ENCODE measurements at regions of chr1 and their contacts with region 1.

Region 1: GRCh38 chr1:8026153-8026975 is at the start of gene ERRFI1:
- DNase-seq: peak; percentile 93 to 97
- ATAC-seq: peak; percentile 96 to 99 (median 97)
- H3K4me3 ChIP-seq: peak within 1 kb of the TSS; percentile 51 to 91 (median 88)
- H3K27ac ChIP-seq: peak within 1 kb of the TSS; percentile 87 to 94 (median 90)
- H3K4me1 ChIP-seq: peaks cover 0 to 59% (median 35%) of the 10 kb centered on the region in 9 donors
- H3K27me3 ChIP-seq: peaks cover 0 to 58% (median 0%) of the 10 kb centered on the region in 7 donors
- CTCF ChIP-seq: no peak
- total RNA-seq, gene ERRFI1: 5.8 to 15.9 (median 10.0) TPM

Region 2: DNA sequence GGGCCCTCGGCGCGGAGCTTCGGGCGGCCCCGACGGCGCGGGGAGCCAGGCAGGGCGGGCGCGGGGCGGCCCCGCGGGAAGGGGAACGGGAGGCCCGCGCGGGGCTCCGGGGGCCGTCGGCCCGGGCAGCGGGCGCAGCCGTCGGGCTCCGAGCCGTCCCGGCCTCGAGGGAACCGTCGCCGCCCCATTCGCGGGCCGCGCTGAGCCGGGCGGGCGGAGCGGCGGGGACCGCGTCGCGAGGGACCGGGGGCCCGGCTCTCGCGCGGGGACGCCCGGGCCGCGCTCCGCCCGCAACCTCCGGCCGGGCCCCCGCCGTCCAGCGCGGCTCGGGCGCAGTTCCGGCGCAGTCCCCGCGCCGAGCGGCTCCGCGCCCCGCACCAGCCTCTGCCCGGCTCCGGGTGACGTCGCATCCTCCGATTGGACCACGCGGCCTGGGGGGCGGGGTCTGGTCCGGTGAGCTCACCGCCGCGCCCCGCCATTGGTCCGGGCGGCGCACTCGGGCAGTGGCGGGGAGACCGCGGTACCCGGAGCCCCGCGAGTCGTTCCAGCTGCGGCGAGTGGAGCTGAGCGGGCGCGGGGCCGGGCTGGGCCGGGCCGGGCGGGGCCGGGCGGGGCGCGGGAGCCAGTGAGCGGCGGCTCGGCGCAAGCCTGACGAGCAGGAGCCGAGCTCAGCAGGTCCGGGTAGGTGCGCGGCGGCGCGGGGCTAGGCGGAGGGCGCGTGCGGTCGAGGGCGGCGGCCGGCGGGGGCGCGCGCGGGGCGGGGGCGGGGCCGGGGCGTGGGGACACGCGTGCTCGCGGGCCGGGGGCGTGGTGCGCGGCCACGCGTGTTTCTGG is 321.9 kb before region 1 on chr1:
- intact Hi-C with region 1: no loop called
- DNase-seq: peak; percentile 94 to 95
- ATAC-seq: peak; percentile 99 to 100 (median 100)
- H3K4me3 ChIP-seq: peak overlapping the region in 9 of 10 donors; percentile 48 to 64 (median 57)
- H3K27ac ChIP-seq: peak overlapping the region in 1 of 10 donors; percentile 25
- H3K4me1 ChIP-seq: peaks cover 0 to 16% (median 6%) of the 10 kb centered on the region in 9 donors
- H3K27me3 ChIP-seq: peaks cover 0 to 63% (median 0%) of the 10 kb centered on the region in 7 donors
- CTCF ChIP-seq: no peak

Region 3: GRCh38 chr1:7983086-7983778 is 43.1 kb before region 1 on chr1:
- intact Hi-C with region 1: loop called in 2 of 10 experiments (anchors 5 kb)
- DNase-seq: peak in 1 of 2 donors; percentile 7
- ATAC-seq: peak in 6 of 8 donors; percentile 54 to 71 (median 68)
- H3K4me3 ChIP-seq: no peak overlapping the region
- H3K27ac ChIP-seq: peak overlapping the region in 1 of 10 donors; percentile 4
- H3K4me1 ChIP-seq: peaks cover 0 to 26% (median 15%) of the 10 kb centered on the region in 9 donors
- H3K27me3 ChIP-seq: no peaks in the 10 kb centered on the region
- CTCF ChIP-seq: no peak

Region 4: DNA sequence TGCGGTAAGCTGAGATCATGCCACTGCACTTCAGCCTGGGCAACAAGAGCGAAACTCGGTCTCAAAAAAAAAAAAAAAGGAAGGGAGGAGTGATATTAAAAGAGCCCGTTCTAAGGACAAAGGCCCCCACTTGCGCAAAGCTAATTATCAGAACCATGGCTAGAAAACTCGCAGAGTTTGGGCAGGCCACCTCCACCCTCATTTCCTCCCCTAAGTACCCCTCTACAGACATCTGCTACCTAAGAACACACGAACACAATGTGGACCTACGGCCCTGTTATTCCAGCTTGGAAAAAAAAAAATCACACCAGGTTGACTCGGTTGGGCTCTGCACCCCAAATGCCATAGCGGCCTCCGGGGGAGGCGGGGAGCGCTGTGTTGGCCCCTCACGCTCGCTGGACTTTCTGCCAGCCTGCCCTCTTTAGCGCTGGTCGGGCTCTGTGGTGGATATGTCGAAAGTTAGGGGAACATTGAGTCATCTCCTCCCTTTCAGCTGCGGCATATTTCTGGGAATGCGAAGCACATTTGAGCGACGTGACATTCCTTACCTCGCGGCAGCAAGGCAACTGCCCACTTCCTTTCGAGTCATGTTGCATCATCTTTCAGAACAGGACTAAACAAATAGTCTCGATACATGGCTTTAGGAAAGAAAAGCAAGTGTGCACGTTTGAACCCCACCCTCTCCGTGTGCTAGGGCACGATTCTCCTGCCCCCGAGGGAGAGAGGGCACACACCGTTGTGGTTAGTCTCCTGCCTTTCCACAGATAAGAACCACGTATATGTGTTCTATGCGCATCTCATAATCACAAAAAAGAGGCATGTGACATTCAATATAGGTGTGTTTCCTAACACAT is 185.5 kb after region 1 on chr1:
- intact Hi-C with region 1: loop called in 3 of 10 experiments (anchors 5 to 10 kb)
- DNase-seq: no peak
- ATAC-seq: peak; percentile 23 to 80 (median 50)
- H3K4me3 ChIP-seq: peak overlapping the region in 1 of 10 donors; percentile 7
- H3K27ac ChIP-seq: peak overlapping the region in 1 of 10 donors; percentile 90
- H3K4me1 ChIP-seq: peaks cover 0 to 64% (median 17%) of the 10 kb centered on the region in 9 donors
- H3K27me3 ChIP-seq: peaks cover 0 to 14% (median 5%) of the 10 kb centered on the region in 7 donors
- CTCF ChIP-seq: no peak

Region 5: GRCh38 chr1:8238851-8239305 is 212.5 kb after region 1 on chr1:
- intact Hi-C with region 1: loop called in 3 of 10 experiments (anchors 5 to 10 kb)
- DNase-seq: no peak
- ATAC-seq: peak in 7 of 8 donors; percentile 61 to 84 (median 74)
- H3K4me3 ChIP-seq: no peak overlapping the region
- H3K27ac ChIP-seq: peak overlapping the region in 3 of 10 donors; percentile 9 to 60 (median 30)
- H3K4me1 ChIP-seq: peaks cover 0 to 21% (median 0%) of the 10 kb centered on the region in 9 donors
- H3K27me3 ChIP-seq: peaks cover 0 to 8% (median 5%) of the 10 kb centered on the region in 7 donors
- CTCF ChIP-seq: peak in 8 of 9 donors; percentile 5 to 51 (median 35)

Region 6: DNA sequence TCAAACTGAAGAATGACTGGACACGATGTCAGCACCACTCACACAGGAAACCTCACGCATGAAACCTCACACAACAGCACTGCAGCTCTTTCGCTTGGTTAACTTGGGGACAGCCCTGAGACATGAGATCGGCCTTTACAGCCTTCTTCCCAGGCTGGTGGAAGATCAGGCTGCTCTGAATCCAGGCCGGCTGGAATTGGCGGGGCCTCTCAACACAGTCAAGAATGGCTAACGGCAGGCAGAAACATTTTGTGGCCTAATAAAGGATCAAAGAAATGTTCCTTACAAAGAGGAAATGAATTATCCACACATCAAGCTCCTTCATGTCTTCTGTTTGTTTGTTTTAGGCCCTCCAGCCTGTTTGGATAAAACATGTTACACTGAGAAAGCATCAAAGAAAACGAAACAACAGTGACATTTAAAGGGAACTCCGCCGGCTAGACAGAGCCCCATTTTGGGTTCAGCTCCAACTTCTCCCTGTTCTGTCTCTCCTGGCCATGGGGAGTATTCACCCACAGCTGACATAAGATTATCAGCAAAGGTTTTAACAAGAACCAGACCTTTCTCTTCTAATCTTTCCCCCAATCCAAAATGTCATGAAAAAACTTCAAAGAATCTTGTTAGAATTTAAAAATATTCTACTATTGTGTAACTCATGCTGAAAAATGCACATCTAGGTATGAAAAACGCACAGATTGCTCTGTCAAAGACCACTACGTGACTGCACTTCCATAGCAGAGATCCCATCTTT is 422.7 kb after region 1 on chr1:
- intact Hi-C with region 1: loop called in 1 of 10 experiments (anchors 10 kb)
- DNase-seq: peak in 1 of 2 donors; percentile 31
- ATAC-seq: peak in 7 of 8 donors; percentile 37 to 81 (median 65)
- H3K4me3 ChIP-seq: peak overlapping the region in 5 of 10 donors; percentile 0 to 24 (median 13)
- H3K27ac ChIP-seq: peak overlapping the region in 9 of 10 donors; percentile 2 to 77 (median 62)
- H3K4me1 ChIP-seq: peaks cover 0 to 44% (median 29%) of the 10 kb centered on the region in 9 donors
- H3K27me3 ChIP-seq: no peaks in the 10 kb centered on the region
- CTCF ChIP-seq: no peak